Esophagus muscularis mucosa (tissue), 4 donors: ENCODE measurements at regions of chr1 and their contacts with region 1.

Region 1: GRCh38 chr1:54488779-54489626 is 59.0 kb upstream of the ACOT11 start:
- DNase-seq: peak; percentile 95
- H3K4me3 ChIP-seq: peak overlapping the region; percentile 59 to 71 (median 66)
- H3K27ac ChIP-seq: peak overlapping the region; percentile 92 to 95 (median 94)
- H3K4me1 ChIP-seq: peaks cover 27 to 42% (median 38%) of the 10 kb centered on the region in 4 donors
- H3K27me3 ChIP-seq: no peaks in the 10 kb centered on the region
- CTCF ChIP-seq: peak; percentile 96 to 98 (median 97)
- EP300 ChIP-seq: no peak
- POLR2A ChIP-seq: no peak

Region 2: GRCh38 chr1:54070171-54070837 is 418.7 kb before region 1 on chr1:
- intact Hi-C with region 1: loop called (anchors 5 kb)
- DNase-seq: no peak
- H3K4me3 ChIP-seq: no peak overlapping the region
- H3K27ac ChIP-seq: no peak overlapping the region
- H3K4me1 ChIP-seq: no peaks in the 10 kb centered on the region
- H3K27me3 ChIP-seq: no peaks in the 10 kb centered on the region
- CTCF ChIP-seq: peak; percentile 63 to 75 (median 68)
- EP300 ChIP-seq: no peak
- POLR2A ChIP-seq: no peak

Region 3: DNA sequence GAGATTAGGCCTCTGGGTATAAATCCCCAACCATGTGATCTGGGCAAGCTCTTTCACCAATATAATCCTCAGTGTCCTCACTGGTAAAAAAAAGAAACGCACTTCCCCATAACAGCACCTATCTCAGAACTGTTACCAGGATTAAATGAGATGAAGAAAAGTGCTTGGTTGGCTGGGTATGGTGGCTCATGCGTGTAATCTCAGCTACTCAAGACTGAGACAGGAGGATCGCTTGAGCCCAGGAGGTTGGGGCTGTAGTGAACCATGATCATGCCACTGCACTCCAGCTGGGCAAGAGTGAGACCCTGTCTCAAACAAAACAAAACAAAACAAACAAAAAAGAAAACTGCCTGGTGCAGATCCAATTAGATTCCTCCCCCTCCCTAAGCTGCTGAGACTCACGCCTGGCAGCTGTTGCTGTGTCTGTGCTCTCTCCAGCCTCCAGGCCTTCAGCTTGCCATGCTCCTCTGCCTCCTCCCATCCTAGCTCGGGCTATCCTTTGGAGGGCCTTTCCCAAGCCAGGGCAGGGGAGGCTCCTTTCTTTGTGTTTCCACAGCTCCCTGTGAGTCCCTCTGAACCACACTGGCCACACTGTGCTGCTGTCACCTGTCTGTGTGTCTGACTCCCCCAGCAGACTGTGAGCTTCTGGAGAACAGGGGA is 308.2 kb before region 1 on chr1:
- intact Hi-C with region 1: loop called (anchors 5 kb)
- DNase-seq: no peak
- H3K4me3 ChIP-seq: no peak overlapping the region
- H3K27ac ChIP-seq: no peak overlapping the region
- H3K4me1 ChIP-seq: no peaks in the 10 kb centered on the region
- H3K27me3 ChIP-seq: no peaks in the 10 kb centered on the region
- CTCF ChIP-seq: no peak
- EP300 ChIP-seq: no peak
- POLR2A ChIP-seq: no peak

Region 4: GRCh38 chr1:54273092-54273794 is 215.8 kb before region 1 on chr1:
- intact Hi-C with region 1: loop called (anchors 2 kb)
- DNase-seq: peak; percentile 94
- H3K4me3 ChIP-seq: peak overlapping the region; percentile 23 to 43 (median 34)
- H3K27ac ChIP-seq: peak overlapping the region; percentile 90 to 97 (median 95)
- H3K4me1 ChIP-seq: peaks cover 77 to 99% (median 95%) of the 10 kb centered on the region in 4 donors
- H3K27me3 ChIP-seq: no peaks in the 10 kb centered on the region
- CTCF ChIP-seq: peak in 2 of 3 experiments; percentile 78
- EP300 ChIP-seq: peak; percentile 56
- POLR2A ChIP-seq: no peak

Region 5: DNA sequence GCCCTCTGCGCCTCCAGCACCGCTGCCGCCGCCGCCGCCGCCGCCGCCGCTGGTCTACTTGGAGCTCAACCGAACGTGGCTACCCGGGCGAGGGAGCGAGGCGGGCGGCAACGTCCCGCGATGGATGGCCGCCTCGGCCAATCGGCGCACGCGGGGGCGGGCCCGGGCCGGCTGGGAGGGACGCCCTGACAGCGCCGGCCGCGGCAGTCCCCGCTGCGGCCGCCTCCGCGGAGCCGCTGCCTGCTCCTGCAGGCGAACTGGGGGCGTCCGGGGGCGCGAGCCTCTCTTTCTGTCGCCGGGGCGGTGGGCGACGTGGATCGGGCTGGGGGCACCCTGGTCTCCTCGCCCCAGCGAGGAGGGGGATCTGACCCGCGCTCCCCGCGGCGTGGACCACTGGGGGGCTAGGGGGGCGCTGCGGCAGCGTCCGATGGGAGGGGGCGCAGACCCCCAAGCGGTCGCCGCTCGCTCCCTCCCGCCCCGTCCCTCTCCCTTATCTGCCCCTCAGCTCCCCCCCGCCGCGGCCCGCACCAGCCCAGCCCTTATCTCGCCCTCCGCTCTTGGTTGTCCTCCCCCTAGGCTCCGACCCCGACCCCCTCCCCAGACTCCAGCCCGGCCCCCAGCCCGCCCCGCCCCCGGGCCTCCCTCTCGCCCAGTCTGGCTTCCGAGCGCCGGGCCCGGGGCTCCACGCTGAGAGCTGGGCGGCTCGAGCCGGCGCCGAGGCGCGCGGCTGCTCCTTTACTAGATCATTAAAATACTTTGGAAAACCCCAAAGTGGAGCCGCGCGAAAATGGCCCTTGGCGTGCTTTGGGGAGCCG is 82.5 kb before region 1 on chr1 and contains the start of gene SSBP3:
- intact Hi-C with region 1: loop called (anchors 1 kb)
- DNase-seq: peak; percentile 95
- H3K4me3 ChIP-seq: peak within 1 kb of the TSS; percentile 88 to 99 (median 97)
- H3K27ac ChIP-seq: peak within 1 kb of the TSS; percentile 93 to 99 (median 98)
- H3K4me1 ChIP-seq: peaks cover 32 to 64% (median 56%) of the 10 kb centered on the region in 4 donors
- H3K27me3 ChIP-seq: no peaks in the 10 kb centered on the region
- CTCF ChIP-seq: peak in 2 of 3 experiments; percentile 13 to 14
- EP300 ChIP-seq: no peak
- POLR2A ChIP-seq: peak; percentile 56
- total RNA-seq, gene SSBP3: 32.8 to 63.4 (median 47.4) TPM

Region 6: DNA sequence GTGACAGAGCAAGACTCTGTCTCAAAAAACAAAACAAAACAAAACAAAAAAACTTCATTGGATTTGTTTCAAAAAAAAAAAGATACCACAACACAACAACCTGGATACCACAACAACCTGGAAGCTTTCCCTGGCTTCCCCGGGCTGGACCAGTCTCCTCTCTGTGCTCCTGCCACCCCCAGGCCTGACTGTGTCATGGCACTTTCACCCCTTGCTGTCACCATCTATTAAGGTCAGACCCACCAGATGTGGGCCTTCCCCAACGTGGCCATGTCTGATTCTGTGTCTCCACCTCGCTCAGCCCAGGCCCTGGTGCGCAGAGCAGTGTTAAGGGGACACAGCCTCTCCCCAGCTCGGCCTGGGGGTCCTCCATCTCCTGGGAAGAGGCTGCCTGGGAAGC is 30.7 kb after region 1 on chr1:
- intact Hi-C with region 1: no loop called
- DNase-seq: no peak
- H3K4me3 ChIP-seq: no peak overlapping the region
- H3K27ac ChIP-seq: no peak overlapping the region
- H3K4me1 ChIP-seq: no peaks in the 10 kb centered on the region
- H3K27me3 ChIP-seq: no peaks in the 10 kb centered on the region
- CTCF ChIP-seq: no peak
- EP300 ChIP-seq: no peak
- POLR2A ChIP-seq: no peak